ENCODE measurements at regions of chr11 and their contacts with region 1.

Region 1: GRCh38 chr11:56841210-56841810 is 92.8 kb upstream of the OR9G4 start:
- DNase-seq: peak; percentile 56
- ATAC-seq: peak; percentile 83
- H3K4me3 ChIP-seq: no peak overlapping the region
- H3K27ac ChIP-seq: no peak overlapping the region
- H3K4me1 ChIP-seq: no peaks in the 10 kb centered on the region
- H3K27me3 ChIP-seq: no peaks in the 10 kb centered on the region
- CTCF ChIP-seq: peak; percentile 73
- POLR2A ChIP-seq: no peak
- RAD21 ChIP-seq: peak; percentile 84

Region 2: GRCh38 chr11:57131080-57131790 is 289.9 kb after region 1 on chr11:
- CTCF ChIA-PET with region 1: no interaction called
- POLR2A ChIA-PET with region 1: no interaction called
- dilution Hi-C with region 1: no loop called
- in situ Hi-C with region 1: no loop called
- intact Hi-C with region 1: loop called (anchors 5 kb)
- DNase-seq: peak; percentile 13
- ATAC-seq: peak; percentile 77
- H3K4me3 ChIP-seq: no peak overlapping the region
- H3K27ac ChIP-seq: no peak overlapping the region
- H3K4me1 ChIP-seq: no peaks in the 10 kb centered on the region
- H3K27me3 ChIP-seq: peaks cover 7% of the 10 kb centered on the region; the same call in 1 of the 2 replicates
- CTCF ChIP-seq: peak; percentile 65
- POLR2A ChIP-seq: no peak
- RAD21 ChIP-seq: peak; percentile 80

Region 3: DNA sequence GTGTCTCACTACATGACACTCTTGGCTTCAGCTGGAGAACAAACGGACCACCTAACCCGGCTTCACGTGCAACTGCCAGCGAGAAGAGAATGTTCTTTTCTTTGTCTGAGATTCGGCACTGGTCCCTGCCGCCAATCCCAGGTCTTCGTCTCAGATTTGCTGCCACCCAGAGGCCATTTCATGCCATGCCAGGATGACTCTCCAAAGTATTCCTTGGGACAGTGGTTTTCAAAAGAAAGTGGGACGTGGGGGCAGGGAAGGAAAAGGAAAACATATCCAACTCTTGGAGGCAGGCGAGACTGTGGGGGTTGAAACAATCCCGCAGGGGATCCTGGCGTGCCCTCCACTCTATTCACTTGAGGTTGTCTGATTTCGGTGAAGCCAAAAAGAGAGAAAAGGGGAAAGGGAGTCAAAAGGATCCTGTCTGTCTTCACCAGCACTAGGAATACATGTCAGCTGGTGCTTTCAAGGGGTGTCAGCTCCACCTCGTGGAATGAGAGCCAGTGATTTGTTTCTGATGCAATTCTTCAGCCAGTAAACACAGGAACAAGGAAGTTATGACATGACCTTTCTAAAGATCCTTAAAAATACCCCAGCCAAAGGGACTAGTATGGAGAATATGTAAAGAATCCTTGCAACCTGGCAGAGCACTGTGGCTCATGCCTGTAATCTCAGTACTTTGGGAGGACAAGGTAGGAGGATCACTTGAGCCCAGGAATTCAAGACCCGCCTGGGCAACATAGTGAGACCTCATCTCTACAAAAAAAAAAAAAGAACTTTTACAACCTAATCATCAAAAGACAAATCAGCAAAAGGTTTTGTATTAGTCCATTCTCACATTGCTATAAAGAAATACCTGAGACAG is 436.8 kb after region 1 on chr11:
- CTCF ChIA-PET with region 1: no interaction called
- POLR2A ChIA-PET with region 1: no interaction called
- dilution Hi-C with region 1: no loop called
- in situ Hi-C with region 1: no loop called
- intact Hi-C with region 1: loop called (anchors 1 kb)
- DNase-seq: peak; percentile 84
- ATAC-seq: peak; percentile 89
- H3K4me3 ChIP-seq: peak overlapping the region; percentile 13; the same call in 1 of the 2 replicates
- H3K27ac ChIP-seq: peak overlapping the region; percentile 84
- H3K4me1 ChIP-seq: peaks cover 29% of the 10 kb centered on the region
- H3K27me3 ChIP-seq: no peaks in the 10 kb centered on the region
- CTCF ChIP-seq: peak; percentile 90
- POLR2A ChIP-seq: no peak
- RAD21 ChIP-seq: peak; percentile 76

Region 4: GRCh38 chr11:57324886-57325734 is 483.8 kb after region 1 on chr11 and contains the start of gene TNKS1BP1:
- CTCF ChIA-PET with region 1: interaction called, 3 read pairs
- POLR2A ChIA-PET with region 1: no interaction called
- dilution Hi-C with region 1: no loop called
- in situ Hi-C with region 1: no loop called
- intact Hi-C with region 1: loop called (anchors 2 kb)
- DNase-seq: peak; percentile 97
- ATAC-seq: peak; percentile 80
- H3K4me3 ChIP-seq: peak within 1 kb of the TSS; percentile 97
- H3K27ac ChIP-seq: peak within 1 kb of the TSS; percentile 99
- H3K4me1 ChIP-seq: peaks cover 20% of the 10 kb centered on the region
- H3K27me3 ChIP-seq: no peaks in the 10 kb centered on the region
- CTCF ChIP-seq: no peak
- POLR2A ChIP-seq: peak; percentile 81
- RAD21 ChIP-seq: 0 out of 2 replicates have a peak, but pooled peaks have one; percentile 11
- total RNA-seq, gene TNKS1BP1: 28.6 and 31.7 TPM in 2 replicates

Region 5: GRCh38 chr11:57456960-57457642 is 615.8 kb after region 1 on chr11:
- CTCF ChIA-PET with region 1: no interaction called
- POLR2A ChIA-PET with region 1: no interaction called
- dilution Hi-C with region 1: no loop called
- in situ Hi-C with region 1: no loop called
- intact Hi-C with region 1: loop called (anchors 10 kb)
- DNase-seq: peak; percentile 77
- ATAC-seq: peak; percentile 89
- H3K4me3 ChIP-seq: no peak overlapping the region
- H3K27ac ChIP-seq: no peak overlapping the region
- H3K4me1 ChIP-seq: peaks cover 3% of the 10 kb centered on the region; the same call in 1 of the 2 replicates
- H3K27me3 ChIP-seq: peaks cover 51% of the 10 kb centered on the region
- CTCF ChIP-seq: peak; percentile 97
- POLR2A ChIP-seq: no peak
- RAD21 ChIP-seq: peak; percentile 92

Region 6: DNA sequence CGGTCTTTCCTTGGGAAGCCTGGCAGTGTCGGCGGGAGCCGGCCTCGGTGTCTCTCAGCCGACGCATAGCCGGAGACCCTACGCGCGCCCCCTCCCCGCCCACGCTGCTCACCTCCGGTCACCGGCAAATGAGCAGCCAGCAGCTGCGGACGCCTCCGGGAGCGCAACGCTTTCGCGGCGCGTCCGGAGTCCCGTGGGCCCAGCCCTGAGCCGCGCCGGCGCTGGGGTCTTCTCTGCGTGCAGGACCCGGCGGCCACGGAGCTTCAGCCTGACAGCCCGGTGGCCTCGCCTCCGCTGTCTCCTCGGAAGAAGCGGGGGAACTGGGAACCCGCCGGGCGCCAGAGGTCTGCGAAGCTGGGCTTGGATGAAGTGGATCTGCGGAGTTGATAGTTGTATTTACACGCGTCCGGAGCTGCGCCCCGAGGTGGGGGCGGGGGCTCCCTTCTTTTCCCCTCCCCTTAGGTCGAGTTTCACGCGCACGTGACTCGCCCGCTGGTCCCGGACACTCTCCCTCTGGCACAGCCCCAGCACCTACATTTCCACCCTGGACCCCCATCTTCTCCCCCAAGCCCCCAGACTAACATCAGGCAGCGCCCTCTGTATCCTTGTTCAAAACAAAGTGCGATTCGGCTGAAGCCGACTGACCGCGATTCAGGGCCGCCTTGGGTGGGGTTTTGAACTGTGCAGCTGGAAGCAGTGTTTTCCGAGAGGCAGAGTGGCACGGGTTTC is 674.2 kb after region 1 on chr11 and contains the start of gene SLC43A1:
- CTCF ChIA-PET with region 1: no interaction called
- POLR2A ChIA-PET with region 1: no interaction called
- dilution Hi-C with region 1: no loop called
- in situ Hi-C with region 1: loop called (anchors 25 kb)
- intact Hi-C with region 1: no loop called
- DNase-seq: peak; percentile 59
- ATAC-seq: peak; percentile 85
- H3K4me3 ChIP-seq: peak within 1 kb of the TSS; percentile 95
- H3K27ac ChIP-seq: peak within 1 kb of the TSS; percentile 86
- H3K4me1 ChIP-seq: no peaks in the 10 kb centered on the region; the same call in 1 of the 2 replicates
- H3K27me3 ChIP-seq: no peaks in the 10 kb centered on the region
- CTCF ChIP-seq: no peak
- POLR2A ChIP-seq: no peak
- RAD21 ChIP-seq: no peak
- total RNA-seq, gene SLC43A1: 8.6 and 10.0 TPM in 2 replicates